Activated CD4-positive, alpha-beta T cell treated with anti-CD3 and anti-CD28 coated beads for 36 hours (primary cell): ENCODE measurements at regions of chrX and their contacts with region 1.

Region 1: GRCh38 chrX:137432608-137433007 is 133.3 kb upstream of the ZIC3 start:
- DNase-seq: peak; percentile 32
- ATAC-seq: no peak
- H3K4me3 Mint-ChIP-seq: no peak overlapping the region
- H3K27ac Mint-ChIP-seq: no peak overlapping the region
- H3K4me1 Mint-ChIP-seq: no peaks in the 10 kb centered on the region
- H3K27me3 Mint-ChIP-seq: peaks cover 27% of the 10 kb centered on the region

Region 2: GRCh38 chrX:137342973-137343372 is 89.6 kb before region 1 on chrX:
- CTCF ChIA-PET with region 1: no interaction called
- POLR2A ChIA-PET with region 1: no interaction called
- intact Hi-C with region 1: no loop called
- DNase-seq: no peak
- ATAC-seq: no peak
- H3K4me3 Mint-ChIP-seq: no peak overlapping the region
- H3K27ac Mint-ChIP-seq: no peak overlapping the region
- H3K4me1 Mint-ChIP-seq: no peaks in the 10 kb centered on the region
- H3K27me3 Mint-ChIP-seq: peaks cover 4% of the 10 kb centered on the region

Region 3: DNA sequence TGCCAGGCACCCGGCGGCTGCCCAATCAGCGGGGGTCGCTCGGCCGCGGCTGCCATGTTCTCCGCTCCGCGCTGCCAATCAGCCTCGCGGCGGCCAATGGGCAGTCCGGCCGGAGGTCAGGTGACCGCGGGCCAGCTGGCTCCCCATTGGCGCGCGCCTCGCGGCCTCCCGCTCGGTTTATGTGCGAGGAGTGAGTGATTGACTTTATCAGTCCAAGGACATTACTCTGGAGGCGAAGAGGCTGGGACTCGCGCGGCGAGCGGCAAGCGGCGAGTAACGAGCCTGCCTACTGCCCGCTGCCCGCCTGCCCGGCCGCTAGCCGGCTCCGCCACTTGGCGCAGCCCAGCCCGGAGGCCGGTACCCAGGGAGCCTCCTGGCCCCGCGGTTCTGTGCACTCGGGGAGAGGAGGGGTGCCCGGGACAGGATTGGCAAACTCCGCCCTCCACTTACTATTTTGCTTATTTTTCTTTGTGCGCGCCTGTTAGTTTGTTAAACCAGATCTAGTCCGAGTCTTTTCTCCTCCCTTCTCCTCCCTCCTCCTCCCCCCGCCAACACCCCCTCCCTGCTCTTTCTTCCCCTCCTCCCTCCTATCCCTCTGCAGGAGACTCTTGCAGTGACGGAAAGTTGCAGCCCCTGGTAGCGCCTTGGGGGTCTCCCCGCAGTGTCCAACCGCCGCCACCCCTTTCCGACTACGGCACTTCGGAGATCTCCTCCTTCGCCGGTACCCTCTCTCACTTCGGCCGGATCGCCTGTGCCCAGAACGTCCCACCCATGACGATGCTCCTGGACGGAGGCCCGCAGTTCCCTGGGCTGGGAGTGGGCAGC is 133.5 kb after region 1 on chrX and contains the start of gene ZIC3:
- CTCF ChIA-PET with region 1: no interaction called
- POLR2A ChIA-PET with region 1: no interaction called
- intact Hi-C with region 1: loop called (anchors 2 to 5 kb)
- DNase-seq: peak; percentile 58
- ATAC-seq: peak; percentile 71
- H3K4me3 Mint-ChIP-seq: peak within 1 kb of the TSS; percentile 55
- H3K27ac Mint-ChIP-seq: no peak within 1 kb of the TSS
- H3K4me1 Mint-ChIP-seq: peaks cover 17% of the 10 kb centered on the region
- H3K27me3 Mint-ChIP-seq: peaks cover 45% of the 10 kb centered on the region
- total RNA-seq, gene ZIC3: not detected

Region 4: GRCh38 chrX:137926090-137926489 is 493.5 kb after region 1 on chrX:
- CTCF ChIA-PET with region 1: interaction called, 3 read pairs
- POLR2A ChIA-PET with region 1: no interaction called
- intact Hi-C with region 1: loop called in 1 of 2 experiments (anchors 1 kb)
- DNase-seq: no peak
- ATAC-seq: no peak
- H3K4me3 Mint-ChIP-seq: no peak overlapping the region
- H3K27ac Mint-ChIP-seq: no peak overlapping the region
- H3K4me1 Mint-ChIP-seq: no peaks in the 10 kb centered on the region
- H3K27me3 Mint-ChIP-seq: peaks cover 1% of the 10 kb centered on the region

Region 5: GRCh38 chrX:138026211-138026610 is 593.6 kb after region 1 on chrX:
- CTCF ChIA-PET with region 1: no interaction called
- POLR2A ChIA-PET with region 1: no interaction called
- intact Hi-C with region 1: loop called in 1 of 2 experiments (anchors 2 kb)
- DNase-seq: no peak
- ATAC-seq: no peak
- H3K4me3 Mint-ChIP-seq: no peak overlapping the region
- H3K27ac Mint-ChIP-seq: no peak overlapping the region
- H3K4me1 Mint-ChIP-seq: no peaks in the 10 kb centered on the region
- H3K27me3 Mint-ChIP-seq: peaks cover 3% of the 10 kb centered on the region

Region 6: GRCh38 chrX:138745196-138745595 is 1312.6 kb after region 1 on chrX:
- CTCF ChIA-PET with region 1: no interaction called
- POLR2A ChIA-PET with region 1: no interaction called
- intact Hi-C with region 1: loop called in 1 of 2 experiments (anchors 5 kb)
- DNase-seq: peak; percentile 6
- ATAC-seq: no peak
- H3K4me3 Mint-ChIP-seq: no peak overlapping the region
- H3K27ac Mint-ChIP-seq: no peak overlapping the region
- H3K4me1 Mint-ChIP-seq: no peaks in the 10 kb centered on the region
- H3K27me3 Mint-ChIP-seq: peaks cover 5% of the 10 kb centered on the region